ENCODE measurements at regions of chr18 and their contacts with region 1.

Region 1: GRCh38 chr18:50967714-50968661 is at the start of gene ELAC1:
- DNase-seq: peak; percentile 60
- H3K4me3 Mint-ChIP-seq: peak within 1 kb of the TSS; percentile 96
- H3K27ac Mint-ChIP-seq: peak within 1 kb of the TSS; percentile 94
- H3K4me1 Mint-ChIP-seq: peaks cover 22% of the 10 kb centered on the region
- H3K27me3 Mint-ChIP-seq: peaks cover 2% of the 10 kb centered on the region
- total RNA-seq, gene ELAC1: 6.7 and 7.7 TPM in 2 replicates

Region 2: GRCh38 chr18:50947899-50948298 is 20.1 kb before region 1 on chr18:
- intact Hi-C with region 1: loop called (anchors 2 kb)
- DNase-seq: no peak
- H3K4me3 Mint-ChIP-seq: no peak overlapping the region
- H3K27ac Mint-ChIP-seq: no peak overlapping the region
- H3K4me1 Mint-ChIP-seq: no peaks in the 10 kb centered on the region
- H3K27me3 Mint-ChIP-seq: no peaks in the 10 kb centered on the region

Region 3: GRCh38 chr18:51029694-51030536 is 61.9 kb after region 1 on chr18 and contains the start of gene SMAD4:
- intact Hi-C with region 1: loop called (anchors 1 kb)
- DNase-seq: peak; percentile 97
- H3K4me3 Mint-ChIP-seq: peak within 1 kb of the TSS; percentile 99
- H3K27ac Mint-ChIP-seq: peak within 1 kb of the TSS; percentile 96
- H3K4me1 Mint-ChIP-seq: peaks cover 55% of the 10 kb centered on the region
- H3K27me3 Mint-ChIP-seq: no peaks in the 10 kb centered on the region
- total RNA-seq, gene SMAD4: 84.4 and 88.7 TPM in 2 replicates

Region 4: DNA sequence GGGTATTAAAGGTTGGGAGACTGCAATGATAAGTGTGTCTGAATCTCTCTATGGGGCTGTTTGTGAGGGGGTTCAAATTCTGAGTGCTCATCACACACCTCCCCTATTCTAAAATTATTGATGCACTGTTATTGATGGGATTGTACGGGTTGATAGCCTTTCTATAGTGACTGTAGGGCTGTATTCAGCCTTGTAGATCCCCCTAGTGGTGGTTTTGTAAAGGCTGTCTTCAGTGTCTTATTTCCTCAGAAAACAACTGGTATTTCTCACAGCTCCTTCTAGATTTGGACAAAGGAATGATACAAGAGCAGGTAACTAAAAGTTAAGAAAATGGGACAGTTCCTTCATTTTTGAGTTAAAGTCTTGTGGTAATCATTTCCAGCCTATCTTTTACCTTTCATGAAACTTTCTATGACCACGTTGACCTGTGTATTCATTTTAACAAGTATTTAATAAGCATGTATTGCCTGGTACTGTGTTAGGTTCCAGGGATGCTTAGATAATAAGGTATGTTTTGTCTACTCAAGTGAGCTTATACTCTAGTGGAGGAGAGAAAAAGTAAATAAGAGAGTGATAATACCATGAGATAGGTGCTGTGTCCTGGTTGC is 83.2 kb after region 1 on chr18:
- intact Hi-C with region 1: loop called (anchors 1 kb)
- DNase-seq: no peak
- H3K4me3 Mint-ChIP-seq: no peak overlapping the region
- H3K27ac Mint-ChIP-seq: peak overlapping the region; percentile 16
- H3K4me1 Mint-ChIP-seq: peaks cover 39% of the 10 kb centered on the region
- H3K27me3 Mint-ChIP-seq: no peaks in the 10 kb centered on the region